HCT116 (cell line): ENCODE measurements at regions of chr3 and their contacts with region 1.

Region 1: GRCh38 chr3:115147329-115148141 is 447 bp upstream of the ZBTB20 start:
- DNase-seq: peak; percentile 99
- ATAC-seq: peak; percentile 84
- H3K4me3 ChIP-seq: peak overlapping the region; percentile 75 to 79
- H3K27ac ChIP-seq: peak overlapping the region; percentile 71
- H3K4me1 ChIP-seq: peaks cover 9 to 17% of the 10 kb centered on the region in 2 experiments; a peak in 3 of 4 replicates
- H3K27me3 ChIP-seq: no peaks in the 10 kb centered on the region
- CTCF ChIP-seq: no peak
- POLR2A ChIP-seq: peak; percentile 56
- RAD21 ChIP-seq: no peak

Region 2: GRCh38 chr3:114005481-114005880 is 1142.1 kb before region 1 on chr3:
- CTCF ChIA-PET with region 1: no interaction called
- POLR2A ChIA-PET with region 1: no interaction called
- RAD21 ChIA-PET with region 1: no interaction called
- intact Hi-C with region 1: no loop called
- DNase-seq: no peak
- ATAC-seq: no peak
- H3K4me3 ChIP-seq: no peak overlapping the region
- H3K27ac ChIP-seq: no peak overlapping the region
- H3K4me1 ChIP-seq: no peaks in the 10 kb centered on the region
- H3K27me3 ChIP-seq: no peaks in the 10 kb centered on the region
- CTCF ChIP-seq: no peak
- POLR2A ChIP-seq: no peak
- RAD21 ChIP-seq: no peak

Region 3: DNA sequence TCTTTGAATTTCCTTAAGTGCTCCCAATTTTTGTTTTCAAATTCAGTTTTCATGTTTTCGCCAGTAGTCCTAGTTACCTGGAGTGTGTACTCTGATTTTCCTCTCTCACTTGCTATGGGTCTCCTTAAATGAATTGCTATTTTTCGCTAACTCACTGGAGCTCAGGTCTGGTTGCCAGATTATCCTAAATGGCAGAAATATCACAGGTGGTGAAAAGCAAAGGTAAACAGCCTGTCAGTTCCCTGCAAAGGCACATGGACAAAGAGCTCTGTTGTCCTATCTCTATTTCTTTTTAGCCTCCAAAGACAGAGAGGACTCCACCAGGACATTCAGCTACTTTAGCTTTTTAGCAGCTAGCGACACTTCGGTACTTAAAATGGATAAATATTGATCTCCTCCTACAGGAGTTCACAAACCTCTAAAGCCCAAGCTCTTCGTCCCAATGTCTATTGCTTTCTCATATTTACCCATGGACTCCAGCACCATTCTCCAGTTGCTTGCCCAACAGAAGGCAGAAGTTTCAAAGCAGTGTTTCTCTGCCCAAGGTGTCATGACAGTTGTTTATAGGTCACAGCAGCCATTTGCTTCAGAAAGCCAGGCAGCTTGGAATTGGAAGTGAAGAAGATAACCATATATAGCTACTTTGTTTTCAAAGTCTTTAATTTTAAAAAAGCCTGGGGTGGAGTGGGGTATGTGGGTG is 12.7 kb before region 1 on chr3:
- CTCF ChIA-PET with region 1: interaction called, 3 read pairs
- POLR2A ChIA-PET with region 1: interaction called, 13 read pairs
- RAD21 ChIA-PET with region 1: no interaction called
- intact Hi-C with region 1: no loop called
- DNase-seq: no peak
- ATAC-seq: no peak
- H3K4me3 ChIP-seq: no peak overlapping the region
- H3K27ac ChIP-seq: no peak overlapping the region
- H3K4me1 ChIP-seq: no peaks in the 10 kb centered on the region
- H3K27me3 ChIP-seq: no peaks in the 10 kb centered on the region
- CTCF ChIP-seq: no peak
- POLR2A ChIP-seq: no peak
- RAD21 ChIP-seq: no peak